Tibial artery (tissue), 4 donors: ENCODE measurements at regions of chr10 and their contacts with region 1.

Region 1: GRCh38 chr10:59913547-59914237 is 7.3 kb upstream of the CCDC6 start:
- DNase-seq: no peak
- H3K4me3 ChIP-seq: no peak overlapping the region
- H3K27ac ChIP-seq: no peak overlapping the region
- H3K4me1 ChIP-seq: peaks cover 0 to 12% (median 2%) of the 10 kb centered on the region in 4 donors
- H3K27me3 ChIP-seq: no peaks in the 10 kb centered on the region
- CTCF ChIP-seq: no peak

Region 2: GRCh38 chr10:59847896-59848295 is 65.8 kb before region 1 on chr10:
- intact Hi-C with region 1: loop called (anchors 2 kb)
- DNase-seq: no peak
- H3K4me3 ChIP-seq: no peak overlapping the region
- H3K27ac ChIP-seq: no peak overlapping the region
- H3K4me1 ChIP-seq: peaks cover 0 to 50% (median 20%) of the 10 kb centered on the region in 4 donors
- H3K27me3 ChIP-seq: no peaks in the 10 kb centered on the region
- CTCF ChIP-seq: no peak

Region 3: GRCh38 chr10:60032723-60033122 is 119.0 kb after region 1 on chr10:
- intact Hi-C with region 1: loop called (anchors 10 kb)
- DNase-seq: peak in 1 of 2 donors; percentile 57
- H3K4me3 ChIP-seq: no peak overlapping the region
- H3K27ac ChIP-seq: no peak overlapping the region
- H3K4me1 ChIP-seq: peaks cover 0 to 15% (median 0%) of the 10 kb centered on the region in 4 donors
- H3K27me3 ChIP-seq: no peaks in the 10 kb centered on the region
- CTCF ChIP-seq: peak; percentile 47 to 55